ENCODE measurements at regions of chr13 and their contacts with region 1.

Region 1: GRCh38 chr13:110116072-110116487 is 190.9 kb downstream of the COL4A1 start:
- DNase-seq: peak; percentile 60
- ATAC-seq: peak; percentile 76
- H3K4me3 ChIP-seq: no peak overlapping the region
- H3K27ac ChIP-seq: no peak overlapping the region
- H3K4me1 ChIP-seq: peaks cover 23% of the 10 kb centered on the region
- H3K27me3 ChIP-seq: no peaks in the 10 kb centered on the region
- CTCF ChIP-seq: peak; percentile 72
- POLR2A ChIP-seq: no peak
- RAD21 ChIP-seq: peak; percentile 78

Region 2: DNA sequence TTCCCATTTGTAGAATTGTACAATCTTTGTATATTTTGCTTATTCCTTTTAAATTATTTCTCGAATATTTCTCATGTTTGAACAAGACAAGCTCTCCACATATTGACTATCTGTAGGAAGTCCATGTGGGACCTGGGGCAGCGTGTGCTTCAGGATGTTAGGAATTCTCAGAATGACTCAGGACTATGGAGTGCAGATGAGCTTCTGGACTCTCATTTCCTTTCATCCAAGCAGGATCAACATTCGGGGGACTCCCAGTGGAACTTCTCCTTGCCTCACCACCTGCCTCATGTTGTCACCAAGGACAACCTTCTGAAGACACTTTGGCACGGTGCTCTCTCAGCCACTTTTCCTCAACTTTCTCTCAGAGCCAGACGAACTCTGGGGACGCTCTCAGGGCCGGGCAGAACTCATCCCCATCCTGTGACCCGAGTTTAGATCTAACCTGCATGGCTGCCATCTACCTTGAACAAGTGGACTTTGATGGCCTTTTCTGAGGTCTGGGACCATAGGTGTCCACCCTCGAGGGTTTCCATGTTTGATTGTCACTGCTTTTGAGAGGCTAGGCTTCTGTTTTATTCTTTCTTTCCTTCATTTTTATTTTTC is 771.4 kb before region 1 on chr13:
- CTCF ChIA-PET with region 1: no interaction called
- POLR2A ChIA-PET with region 1: no interaction called
- dilution Hi-C with region 1: no loop called
- in situ Hi-C with region 1: no loop called
- intact Hi-C with region 1: loop called (anchors 10 kb)
- DNase-seq: peak; percentile 82
- ATAC-seq: peak; percentile 84
- H3K4me3 ChIP-seq: no peak overlapping the region
- H3K27ac ChIP-seq: peak overlapping the region; percentile 69
- H3K4me1 ChIP-seq: peaks cover 13% of the 10 kb centered on the region
- H3K27me3 ChIP-seq: no peaks in the 10 kb centered on the region
- CTCF ChIP-seq: no peak
- POLR2A ChIP-seq: no peak
- RAD21 ChIP-seq: no peak

Region 3: DNA sequence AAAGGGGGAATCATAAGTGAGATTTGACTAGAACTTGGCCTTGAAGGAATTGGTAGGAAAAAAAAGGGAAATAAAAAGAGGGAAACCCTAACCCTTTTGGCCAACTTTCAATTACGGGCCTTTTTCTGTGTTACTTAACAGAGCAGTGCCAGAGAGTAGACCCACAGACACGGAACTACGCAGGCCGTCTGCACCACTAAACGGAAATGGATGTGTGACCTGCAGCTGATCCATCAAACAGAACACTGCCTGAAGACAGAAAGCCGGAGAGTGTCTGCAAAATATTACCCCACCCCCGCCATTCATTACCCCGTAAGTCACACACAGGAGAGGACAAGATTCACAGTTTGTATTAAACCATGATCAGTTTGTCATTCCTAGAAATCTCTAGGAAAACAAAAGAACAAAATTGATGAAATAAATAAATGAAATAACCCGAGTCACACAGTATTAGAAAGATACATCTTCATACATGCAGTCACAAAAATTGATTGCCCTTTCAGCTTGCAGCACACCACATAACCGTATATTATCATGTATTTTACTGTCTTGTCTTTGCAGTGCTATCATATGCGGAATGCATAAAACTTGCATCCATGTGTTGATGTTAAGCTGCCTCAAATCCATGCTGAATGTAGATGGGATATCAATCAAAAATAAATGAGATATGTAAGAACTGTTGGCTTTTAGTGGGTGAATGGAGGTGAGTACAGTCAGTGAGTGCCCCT is 754.4 kb before region 1 on chr13:
- CTCF ChIA-PET with region 1: no interaction called
- POLR2A ChIA-PET with region 1: no interaction called
- dilution Hi-C with region 1: no loop called
- in situ Hi-C with region 1: loop called (anchors 25 kb)
- intact Hi-C with region 1: no loop called
- DNase-seq: no peak
- ATAC-seq: no peak
- H3K4me3 ChIP-seq: no peak overlapping the region
- H3K27ac ChIP-seq: no peak overlapping the region
- H3K4me1 ChIP-seq: no peaks in the 10 kb centered on the region
- H3K27me3 ChIP-seq: no peaks in the 10 kb centered on the region; the same call in 1 of the 2 replicates
- CTCF ChIP-seq: no peak
- POLR2A ChIP-seq: no peak
- RAD21 ChIP-seq: no peak